Mammary epithelial cell (primary cell): ENCODE measurements at regions of chr3 and their contacts with region 1.

Region 1: GRCh38 chr3:74287557-74287956 is 326.9 kb downstream of the CNTN3 start:
- DNase-seq: no peak
- H3K4me3 ChIP-seq: no peak overlapping the region
- H3K27ac ChIP-seq: no peak overlapping the region
- H3K4me1 ChIP-seq: no peaks in the 10 kb centered on the region
- H3K27me3 ChIP-seq: no peaks in the 10 kb centered on the region
- CTCF ChIP-seq: no peak

Region 2: DNA sequence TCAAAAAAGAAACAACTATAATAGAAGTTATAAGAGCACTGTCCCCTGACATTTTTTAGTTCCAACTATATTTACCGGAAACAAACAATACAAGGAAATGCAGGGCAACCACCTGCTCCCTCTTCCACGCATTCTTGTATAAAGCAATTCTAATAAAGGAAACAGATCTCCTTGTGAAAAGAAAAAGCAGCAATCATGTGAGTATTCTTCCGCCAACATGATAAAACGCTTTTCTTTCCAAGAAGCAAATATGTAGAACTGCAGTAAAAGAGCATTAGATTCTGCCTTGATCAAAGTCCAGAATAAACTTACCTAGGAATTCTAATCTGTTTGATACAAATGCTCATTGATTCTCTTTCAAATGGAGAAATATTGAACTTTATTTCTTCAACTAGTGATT is 96.6 kb after region 1 on chr3:
- CTCF ChIA-PET with region 1: no interaction called
- dilution Hi-C with region 1: loop called (anchors 5 kb)
- in situ Hi-C with region 1: no loop called
- intact Hi-C with region 1: no loop called
- DNase-seq: no peak
- H3K4me3 ChIP-seq: no peak overlapping the region
- H3K27ac ChIP-seq: no peak overlapping the region
- H3K4me1 ChIP-seq: no peaks in the 10 kb centered on the region
- H3K27me3 ChIP-seq: no peaks in the 10 kb centered on the region
- CTCF ChIP-seq: no peak

Region 3: DNA sequence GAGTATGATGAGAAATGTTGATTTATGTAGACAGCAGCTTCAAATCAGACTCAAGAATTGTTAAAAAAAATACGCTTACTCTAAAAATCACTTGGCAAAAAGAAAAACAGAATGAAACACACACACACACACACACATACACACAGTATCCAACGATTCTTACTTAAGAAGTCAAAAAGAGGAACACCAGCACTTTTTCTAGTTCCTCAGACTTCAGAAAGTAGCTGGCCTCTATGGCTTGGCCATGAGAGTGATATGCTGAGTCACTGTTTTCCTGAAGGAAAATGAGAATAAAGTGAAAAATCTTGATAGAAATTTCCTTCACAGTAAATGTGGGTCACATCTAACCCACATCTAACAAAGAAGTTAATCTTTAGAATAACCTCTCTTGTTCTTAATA is 304.8 kb after region 1 on chr3:
- CTCF ChIA-PET with region 1: no interaction called
- dilution Hi-C with region 1: no loop called
- in situ Hi-C with region 1: no loop called
- intact Hi-C with region 1: no loop called
- DNase-seq: no peak
- H3K4me3 ChIP-seq: no peak overlapping the region
- H3K27ac ChIP-seq: no peak overlapping the region
- H3K4me1 ChIP-seq: no peaks in the 10 kb centered on the region
- H3K27me3 ChIP-seq: no peaks in the 10 kb centered on the region
- CTCF ChIP-seq: no peak

Region 4: GRCh38 chr3:74988095-74988494 is 700.5 kb after region 1 on chr3:
- CTCF ChIA-PET with region 1: interaction called, 24 read pairs
- dilution Hi-C with region 1: no loop called
- in situ Hi-C with region 1: no loop called
- intact Hi-C with region 1: no loop called
- DNase-seq: no peak
- H3K4me3 ChIP-seq: no peak overlapping the region
- H3K27ac ChIP-seq: no peak overlapping the region
- H3K4me1 ChIP-seq: no peaks in the 10 kb centered on the region
- H3K27me3 ChIP-seq: no peaks in the 10 kb centered on the region
- CTCF ChIP-seq: no peak